BJ (cell line): ENCODE measurements at regions of chr5 and their contacts with region 1.

Region 1: DNA sequence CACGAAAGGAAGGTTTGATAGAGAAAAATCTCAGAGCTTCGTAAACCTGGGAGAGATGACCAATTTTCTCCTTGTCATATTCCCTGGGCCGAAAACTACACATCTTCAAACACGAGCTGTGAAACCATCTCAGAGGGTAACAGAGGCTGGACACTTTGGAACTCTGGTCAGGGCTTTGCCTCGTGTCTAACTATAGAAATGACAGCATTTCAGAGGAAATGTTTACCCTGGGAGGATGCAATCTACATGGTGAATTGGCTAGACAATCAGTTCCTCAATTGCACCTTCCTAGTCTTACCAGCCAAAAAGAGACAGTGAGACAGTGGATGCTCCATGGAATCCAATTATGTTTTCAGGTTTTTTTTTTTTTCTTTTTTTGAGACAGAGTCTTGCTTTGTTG is 108.6 kb upstream of the PPP1R2B start:
- DNase-seq: no peak
- H3K4me3 ChIP-seq: no peak overlapping the region
- H3K27me3 ChIP-seq: no peaks in the 10 kb centered on the region
- CTCF ChIP-seq: no peak

Region 2: GRCh38 chr5:156155598-156155997 is 585.9 kb before region 1 on chr5:
- CTCF ChIA-PET with region 1: no interaction called
- POLR2A ChIA-PET with region 1: interaction called, 12 read pairs
- DNase-seq: no peak
- H3K4me3 ChIP-seq: no peak overlapping the region
- H3K27me3 ChIP-seq: no peaks in the 10 kb centered on the region
- CTCF ChIP-seq: no peak